Psoas muscle (tissue), 8 donors: ENCODE measurements at regions of chr5 and their contacts with region 1.

Region 1: DNA sequence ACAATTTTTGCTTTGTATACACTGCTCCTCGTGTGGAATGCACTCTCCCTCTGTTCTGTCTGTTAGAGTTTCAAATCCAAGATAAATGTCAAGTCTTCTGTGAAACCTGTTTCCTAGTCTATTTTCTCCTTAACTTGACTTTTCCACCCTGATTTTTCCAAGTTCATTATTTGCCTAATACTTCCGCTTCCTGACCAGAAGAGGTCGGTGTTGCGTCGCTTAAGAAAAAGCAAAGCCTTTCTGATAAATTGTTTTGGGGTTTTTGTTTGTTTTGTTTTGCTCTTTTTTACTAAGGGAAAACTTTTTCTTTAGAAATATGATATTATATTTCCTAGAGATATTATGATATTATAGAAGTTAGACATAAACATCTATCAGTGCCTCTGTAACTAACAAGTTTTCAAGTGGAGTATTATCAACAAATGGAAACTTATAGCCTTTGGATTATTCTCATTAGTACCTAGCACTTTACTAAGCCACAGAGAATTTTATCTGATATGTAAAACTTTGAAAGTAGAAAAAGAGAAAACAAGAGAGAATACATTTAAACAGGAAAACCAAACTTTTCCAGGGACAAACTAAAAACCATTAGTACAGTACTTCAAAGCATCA is 55.8 kb downstream of the PHAX start:
- DNase-seq: no peak
- ATAC-seq: no peak
- H3K4me3 ChIP-seq: no peak overlapping the region
- H3K27ac ChIP-seq: no peak overlapping the region
- H3K4me1 ChIP-seq: no peaks in the 10 kb centered on the region
- H3K27me3 ChIP-seq: no peaks in the 10 kb centered on the region
- CTCF ChIP-seq: peak; percentile 72

Region 2: DNA sequence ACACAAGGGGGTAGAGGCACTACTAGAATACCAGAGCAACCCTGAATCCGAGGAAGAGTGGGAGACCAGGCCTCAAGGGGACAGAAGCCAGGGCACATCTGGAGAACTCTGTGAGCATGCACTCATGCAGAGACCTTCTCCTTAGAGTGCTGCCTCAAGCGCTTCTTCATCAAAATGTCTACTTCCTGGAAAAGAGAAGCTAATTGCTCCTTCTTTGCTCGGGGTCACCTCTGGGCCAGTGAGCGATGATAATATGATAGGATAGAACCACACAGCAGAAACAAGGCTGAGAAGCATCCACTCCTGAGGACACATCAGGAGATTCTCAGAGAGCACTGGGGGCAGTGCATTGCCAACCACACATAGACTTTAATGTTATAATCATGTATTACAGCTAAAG is 96.7 kb after region 1 on chr5:
- intact Hi-C with region 1: no loop called
- DNase-seq: no peak
- ATAC-seq: no peak
- H3K4me3 ChIP-seq: no peak overlapping the region
- H3K27ac ChIP-seq: no peak overlapping the region
- H3K4me1 ChIP-seq: no peaks in the 10 kb centered on the region
- H3K27me3 ChIP-seq: no peaks in the 10 kb centered on the region
- CTCF ChIP-seq: no peak

Region 3: DNA sequence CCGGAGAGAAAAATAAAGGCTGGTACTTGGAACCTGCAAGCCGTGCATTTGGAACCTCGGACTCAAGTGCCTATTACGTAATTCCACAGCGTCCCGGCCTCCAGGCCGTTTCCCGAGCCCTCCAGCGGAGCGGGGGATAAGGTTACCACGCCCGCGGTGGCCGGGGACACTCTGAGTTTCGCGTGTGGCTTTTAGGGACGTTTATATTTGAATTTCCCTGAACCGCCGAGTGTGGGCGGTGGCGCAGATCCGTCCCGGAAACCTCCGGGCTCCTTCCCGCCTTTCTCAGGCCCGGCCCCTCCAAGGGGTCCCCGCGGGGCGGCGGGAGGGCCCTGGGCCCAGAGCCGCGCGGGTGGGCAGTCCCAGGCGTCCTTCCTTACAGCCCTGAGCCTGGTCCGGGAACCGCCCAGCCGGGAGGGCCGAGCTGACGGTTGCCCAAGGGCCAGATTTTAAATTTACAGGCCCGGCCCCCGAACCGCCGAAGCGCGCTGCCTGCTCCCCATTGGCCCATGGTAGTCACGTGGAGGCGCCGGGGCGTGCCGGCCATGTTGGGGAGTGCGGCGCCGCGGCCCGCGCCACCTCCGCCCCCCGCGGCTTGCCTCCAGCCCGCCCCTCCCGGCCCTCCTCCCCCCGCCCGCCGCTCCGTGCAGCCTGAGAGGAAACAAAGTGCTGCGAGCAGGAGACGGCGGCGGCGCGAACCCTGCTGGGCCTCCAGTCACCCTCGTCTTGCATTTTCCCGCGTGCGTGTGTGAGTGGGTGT is 120.2 kb after region 1 on chr5 and contains the start of gene LMNB1:
- intact Hi-C with region 1: loop called in 1 of 2 experiments (anchors 5 kb)
- DNase-seq: peak; percentile 95 to 96
- ATAC-seq: peak; percentile 94 to 97 (median 96)
- H3K4me3 ChIP-seq: peak within 1 kb of the TSS; percentile 92
- H3K27ac ChIP-seq: peak within 1 kb of the TSS; percentile 96
- H3K4me1 ChIP-seq: peaks cover 8% of the 10 kb centered on the region
- H3K27me3 ChIP-seq: no peaks in the 10 kb centered on the region
- CTCF ChIP-seq: no peak
- total RNA-seq, gene LMNB1: 1.4 to 4.1 (median 2.1) TPM

Region 4: DNA sequence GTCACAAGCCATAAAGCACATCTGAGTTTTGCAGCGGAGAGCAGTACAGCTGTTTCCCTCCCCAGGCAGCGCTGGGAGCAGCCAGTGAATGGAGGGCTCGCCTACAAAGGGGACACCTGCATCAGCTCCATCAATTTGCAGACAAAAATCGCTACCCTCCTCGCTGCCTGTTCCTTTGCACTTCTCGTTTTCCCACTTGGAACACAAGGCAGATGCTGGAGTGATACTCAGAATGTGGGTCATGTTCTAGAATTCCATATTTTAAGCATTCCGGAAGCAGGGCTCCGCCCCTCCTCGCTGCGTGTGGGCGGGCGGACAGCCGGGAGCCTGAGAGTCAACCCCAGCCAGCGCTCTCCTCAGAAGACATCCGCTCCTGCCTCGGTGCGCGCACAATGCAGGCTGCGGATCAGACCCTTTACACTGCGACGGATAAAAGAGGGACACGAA is 212.5 kb after region 1 on chr5:
- intact Hi-C with region 1: no loop called
- DNase-seq: peak in 1 of 2 donors; percentile 30
- ATAC-seq: peak in 1 of 4 donors; percentile 41
- H3K4me3 ChIP-seq: peak overlapping the region; percentile 32
- H3K27ac ChIP-seq: no peak overlapping the region
- H3K4me1 ChIP-seq: no peaks in the 10 kb centered on the region
- H3K27me3 ChIP-seq: no peaks in the 10 kb centered on the region
- CTCF ChIP-seq: no peak

Region 5: DNA sequence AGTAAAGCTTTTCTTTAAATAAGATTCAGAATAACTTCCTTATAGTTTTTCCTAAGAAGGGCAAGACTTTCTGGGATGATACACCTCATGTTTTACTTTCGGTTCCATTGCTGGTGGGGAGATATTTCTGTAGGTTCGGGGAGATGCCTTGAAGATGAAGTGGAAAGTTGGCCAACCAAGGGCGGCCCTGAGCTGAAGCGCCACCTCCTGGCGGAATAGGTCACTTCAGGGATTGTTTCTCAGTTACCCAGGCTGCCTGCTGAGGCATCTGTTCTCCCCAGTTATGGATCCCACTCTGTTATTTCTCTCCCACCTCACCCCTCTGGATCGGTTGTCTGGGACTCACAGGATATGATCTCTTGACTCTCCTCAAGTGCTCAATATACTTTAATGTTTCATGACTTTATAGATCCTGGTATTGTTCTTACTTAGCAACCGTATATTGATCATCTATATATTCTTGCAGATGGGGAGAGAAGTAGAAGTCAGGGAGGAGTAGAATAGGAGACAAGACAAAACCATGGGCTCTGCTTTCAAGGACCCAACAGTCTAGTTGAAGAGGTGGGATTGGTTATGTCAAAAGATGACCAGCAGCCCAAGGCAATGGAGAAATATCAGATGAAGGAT is 657.5 kb after region 1 on chr5:
- intact Hi-C with region 1: loop called in 1 of 2 experiments (anchors 5 kb)
- DNase-seq: peak; percentile 51 to 71
- ATAC-seq: peak in 2 of 4 donors; percentile 70 to 76
- H3K4me3 ChIP-seq: no peak overlapping the region
- H3K27ac ChIP-seq: no peak overlapping the region
- H3K4me1 ChIP-seq: peaks cover 8% of the 10 kb centered on the region
- H3K27me3 ChIP-seq: no peaks in the 10 kb centered on the region
- CTCF ChIP-seq: peak; percentile 69

Region 6: GRCh38 chr5:127517480-127518318 is 861.2 kb after region 1 on chr5 and contains the start of gene PRRC1:
- intact Hi-C with region 1: loop called in 1 of 2 experiments (anchors 10 kb)
- DNase-seq: peak; percentile 84 to 90
- ATAC-seq: peak; percentile 93 to 97 (median 96)
- H3K4me3 ChIP-seq: peak within 1 kb of the TSS; percentile 96
- H3K27ac ChIP-seq: peak within 1 kb of the TSS; percentile 85
- H3K4me1 ChIP-seq: peaks cover 8% of the 10 kb centered on the region
- H3K27me3 ChIP-seq: no peaks in the 10 kb centered on the region
- CTCF ChIP-seq: no peak
- total RNA-seq, gene PRRC1: 14.0 to 26.6 (median 16.4) TPM